ENCODE measurements at regions of chr3 and their contacts with region 1.

Region 1: GRCh38 chr3:149120051-149120972 is 9.1 kb upstream of the HPS3 start:
- DNase-seq: peak in 9 of 35 experiments; percentile 2 to 80 (median 11)
- ATAC-seq: peak; percentile 67 to 78 (median 74)
- H3K4me3 ChIP-seq: no peak overlapping the region
- H3K4me3 Mint-ChIP-seq: no peak overlapping the region
- H3K27ac ChIP-seq: no peak overlapping the region
- H3K27ac Mint-ChIP-seq: peak overlapping the region in 1 of 2 donors; percentile 34
- H3K4me1 ChIP-seq: no peaks in the 10 kb centered on the region
- H3K4me1 Mint-ChIP-seq: peaks cover 0 to 2% (median 2%) of the 10 kb centered on the region in 3 donors
- H3K27me3 ChIP-seq: peaks cover 0 to 3% of the 10 kb centered on the region in 2 experiments
- H3K27me3 Mint-ChIP-seq: peaks cover 2 to 12% of the 10 kb centered on the region in 2 donors

Region 2: DNA sequence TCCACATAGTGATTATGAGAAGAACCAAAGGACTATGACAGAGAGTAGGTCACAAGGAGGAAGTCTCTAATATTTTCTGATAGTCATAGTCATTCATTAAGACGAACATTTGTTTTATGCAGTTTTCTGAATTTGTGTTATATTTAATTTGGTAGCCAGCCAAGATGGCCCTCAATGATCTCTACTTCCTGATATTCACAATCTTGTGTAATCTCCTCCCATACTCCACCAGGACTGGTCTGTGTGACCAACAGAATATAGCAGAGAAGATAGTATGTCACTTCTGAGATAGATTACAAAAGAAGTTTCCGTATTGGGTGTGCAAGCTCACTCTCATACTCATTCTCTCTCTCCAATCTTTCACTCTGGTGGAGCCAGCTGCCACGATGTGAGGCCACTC is 64.7 kb before region 1 on chr3:
- CTCF ChIA-PET with region 1: no interaction called
- POLR2A ChIA-PET with region 1: no interaction called
- DNase-seq: no peak
- ATAC-seq: no peak
- H3K4me3 ChIP-seq: no peak overlapping the region
- H3K4me3 Mint-ChIP-seq: no peak overlapping the region
- H3K27ac ChIP-seq: no peak overlapping the region
- H3K27ac Mint-ChIP-seq: no peak overlapping the region
- H3K4me1 ChIP-seq: no peaks in the 10 kb centered on the region
- H3K4me1 Mint-ChIP-seq: no peaks in the 10 kb centered on the region
- H3K27me3 ChIP-seq: no peaks in the 10 kb centered on the region
- H3K27me3 Mint-ChIP-seq: no peaks in the 10 kb centered on the region

Region 3: GRCh38 chr3:149273096-149273751 is 152.9 kb after region 1 on chr3:
- CTCF ChIA-PET with region 1: interaction called, 12 to 47 read pairs
- POLR2A ChIA-PET with region 1: no interaction called
- DNase-seq: peak in 11 of 35 experiments; percentile 4 to 82 (median 15)
- ATAC-seq: peak; percentile 50 to 85 (median 58)
- H3K4me3 ChIP-seq: no peak overlapping the region
- H3K4me3 Mint-ChIP-seq: no peak overlapping the region
- H3K27ac ChIP-seq: no peak overlapping the region
- H3K27ac Mint-ChIP-seq: no peak overlapping the region
- H3K4me1 ChIP-seq: peaks cover 6 to 7% of the 10 kb centered on the region in 2 experiments
- H3K4me1 Mint-ChIP-seq: peaks cover 14 to 23% (median 15%) of the 10 kb centered on the region in 3 donors
- H3K27me3 ChIP-seq: no peaks in the 10 kb centered on the region
- H3K27me3 Mint-ChIP-seq: no peaks in the 10 kb centered on the region

Region 4: GRCh38 chr3:149279784-149280183 is 159.5 kb after region 1 on chr3:
- CTCF ChIA-PET with region 1: interaction called, 12 to 47 read pairs
- POLR2A ChIA-PET with region 1: no interaction called
- DNase-seq: no peak
- ATAC-seq: no peak
- H3K4me3 ChIP-seq: no peak overlapping the region
- H3K4me3 Mint-ChIP-seq: no peak overlapping the region
- H3K27ac ChIP-seq: no peak overlapping the region
- H3K27ac Mint-ChIP-seq: no peak overlapping the region
- H3K4me1 ChIP-seq: peaks cover 6 to 7% of the 10 kb centered on the region in 2 experiments
- H3K4me1 Mint-ChIP-seq: peaks cover 14 to 19% (median 15%) of the 10 kb centered on the region in 3 donors
- H3K27me3 ChIP-seq: no peaks in the 10 kb centered on the region
- H3K27me3 Mint-ChIP-seq: no peaks in the 10 kb centered on the region